Caco-2 (cell line): ENCODE measurements at regions of chr4 and their contacts with region 1.

Region 1: DNA sequence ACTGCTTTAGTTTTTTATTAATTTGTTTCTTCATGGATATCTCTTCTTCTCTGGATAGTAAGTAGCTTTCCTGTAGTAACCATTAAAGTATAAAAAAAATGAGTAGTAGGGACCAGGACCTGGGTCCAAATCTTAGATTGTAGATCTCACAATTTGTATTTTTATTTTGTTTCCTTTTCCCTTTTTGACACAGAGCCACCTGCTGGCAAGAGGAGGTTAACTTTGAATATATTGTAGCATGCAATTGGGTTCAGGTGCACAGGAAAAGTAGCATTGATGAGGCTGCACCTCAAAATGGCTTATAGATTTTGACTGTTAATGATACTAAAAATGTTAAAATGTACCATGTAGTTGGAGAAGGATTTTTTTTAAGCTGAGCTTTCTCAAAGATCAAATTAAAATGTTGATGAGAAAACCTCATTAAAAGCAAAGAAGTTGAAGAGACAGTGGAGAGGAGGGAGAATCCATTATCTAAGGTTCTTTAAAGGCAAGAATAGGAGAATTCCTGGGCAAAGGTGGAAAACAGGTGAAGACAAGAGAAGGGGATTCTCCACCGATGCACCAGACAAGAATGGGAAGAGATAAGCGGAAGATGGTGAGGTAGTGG is 48.3 kb upstream of the HPGDS start:
- DNase-seq: peak in 1 of 2 experiments; percentile 30
- H3K4me3 ChIP-seq: no peak overlapping the region
- H3K4me3 Mint-ChIP-seq: no peak overlapping the region
- H3K27ac Mint-ChIP-seq: no peak overlapping the region
- H3K4me1 ChIP-seq: no peaks in the 10 kb centered on the region
- H3K4me1 Mint-ChIP-seq: no peaks in the 10 kb centered on the region
- H3K27me3 ChIP-seq: no peaks in the 10 kb centered on the region
- H3K27me3 Mint-ChIP-seq: no peaks in the 10 kb centered on the region
- CTCF ChIP-seq: peak; percentile 53 to 59

Region 2: DNA sequence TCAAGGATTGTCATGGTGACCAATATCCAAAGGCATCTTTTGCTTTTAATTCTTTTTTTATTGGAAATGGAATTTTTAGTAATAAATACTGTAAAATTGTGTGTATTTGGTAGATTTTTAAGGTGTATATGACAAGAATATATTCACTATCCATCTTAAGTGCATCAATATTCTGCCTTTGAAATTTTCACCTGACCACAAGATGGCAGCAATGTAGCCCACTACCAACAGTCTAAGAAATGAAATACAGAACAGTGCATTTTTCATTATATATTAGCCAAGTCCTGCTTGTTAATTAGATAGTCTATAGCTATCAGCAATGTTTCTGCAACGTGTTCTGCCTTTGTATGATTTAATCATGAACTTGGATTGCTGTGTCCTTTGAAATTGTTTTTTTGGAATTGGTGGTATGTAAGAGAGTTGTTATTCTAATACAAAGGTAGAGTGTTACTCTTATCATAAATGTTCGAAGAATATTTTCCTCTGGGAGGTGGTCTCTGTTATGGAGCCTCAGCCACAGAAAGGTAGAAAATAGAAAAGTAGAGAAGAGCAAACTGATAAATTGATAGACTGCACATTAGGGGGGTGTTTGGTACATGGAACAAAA is 86.4 kb before region 1 on chr4:
- CTCF ChIA-PET with region 1: no interaction called
- POLR2A ChIA-PET with region 1: no interaction called
- intact Hi-C with region 1: loop called (anchors 1 kb)
- DNase-seq: peak in 1 of 2 experiments; percentile 41
- H3K4me3 ChIP-seq: no peak overlapping the region
- H3K4me3 Mint-ChIP-seq: no peak overlapping the region
- H3K27ac Mint-ChIP-seq: no peak overlapping the region
- H3K4me1 ChIP-seq: peaks cover 49% of the 10 kb centered on the region
- H3K4me1 Mint-ChIP-seq: peaks cover 29% of the 10 kb centered on the region
- H3K27me3 ChIP-seq: no peaks in the 10 kb centered on the region
- H3K27me3 Mint-ChIP-seq: no peaks in the 10 kb centered on the region
- CTCF ChIP-seq: peak; percentile 52 to 62

Region 3: GRCh38 chr4:94332983-94333590 is 57.8 kb before region 1 on chr4:
- CTCF ChIA-PET with region 1: interaction called, 15 read pairs
- POLR2A ChIA-PET with region 1: no interaction called
- intact Hi-C with region 1: loop called (anchors 1 kb)
- DNase-seq: peak; percentile 50 to 51
- H3K4me3 ChIP-seq: no peak overlapping the region
- H3K4me3 Mint-ChIP-seq: peak overlapping the region; percentile 59
- H3K27ac Mint-ChIP-seq: peak overlapping the region; percentile 63
- H3K4me1 ChIP-seq: peaks cover 26% of the 10 kb centered on the region
- H3K4me1 Mint-ChIP-seq: peaks cover 18% of the 10 kb centered on the region
- H3K27me3 ChIP-seq: no peaks in the 10 kb centered on the region
- H3K27me3 Mint-ChIP-seq: no peaks in the 10 kb centered on the region
- CTCF ChIP-seq: peak; percentile 19 to 48

Region 4: DNA sequence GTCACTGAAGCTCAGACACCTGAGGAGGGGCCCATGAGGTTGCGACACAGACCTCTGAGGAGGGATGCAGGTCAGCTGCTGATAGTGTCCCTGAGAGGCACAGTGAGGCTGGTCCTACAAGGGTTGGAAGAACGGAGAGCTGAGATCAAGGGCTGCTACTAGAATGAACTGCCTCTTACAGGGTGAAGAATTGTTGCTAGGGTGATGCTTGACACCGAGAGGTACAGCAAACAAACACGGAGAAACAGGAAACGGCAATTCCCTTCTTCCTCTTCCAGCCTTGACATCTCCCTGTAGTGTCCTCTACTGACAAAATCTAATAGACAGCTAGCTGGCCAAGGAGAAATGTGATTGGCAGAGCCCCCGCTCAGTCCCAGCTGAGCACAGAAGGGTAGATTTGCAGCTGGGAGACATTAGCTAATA is 36.4 kb before region 1 on chr4:
- CTCF ChIA-PET with region 1: no interaction called
- POLR2A ChIA-PET with region 1: no interaction called
- intact Hi-C with region 1: no loop called
- DNase-seq: no peak
- H3K4me3 ChIP-seq: no peak overlapping the region
- H3K4me3 Mint-ChIP-seq: no peak overlapping the region
- H3K27ac Mint-ChIP-seq: no peak overlapping the region
- H3K4me1 ChIP-seq: no peaks in the 10 kb centered on the region
- H3K4me1 Mint-ChIP-seq: no peaks in the 10 kb centered on the region
- H3K27me3 ChIP-seq: no peaks in the 10 kb centered on the region
- H3K27me3 Mint-ChIP-seq: no peaks in the 10 kb centered on the region
- CTCF ChIP-seq: no peak